CD4-positive, alpha-beta T cell (primary cell): ENCODE measurements at regions of chr10 and their contacts with region 1.

Region 1: DNA sequence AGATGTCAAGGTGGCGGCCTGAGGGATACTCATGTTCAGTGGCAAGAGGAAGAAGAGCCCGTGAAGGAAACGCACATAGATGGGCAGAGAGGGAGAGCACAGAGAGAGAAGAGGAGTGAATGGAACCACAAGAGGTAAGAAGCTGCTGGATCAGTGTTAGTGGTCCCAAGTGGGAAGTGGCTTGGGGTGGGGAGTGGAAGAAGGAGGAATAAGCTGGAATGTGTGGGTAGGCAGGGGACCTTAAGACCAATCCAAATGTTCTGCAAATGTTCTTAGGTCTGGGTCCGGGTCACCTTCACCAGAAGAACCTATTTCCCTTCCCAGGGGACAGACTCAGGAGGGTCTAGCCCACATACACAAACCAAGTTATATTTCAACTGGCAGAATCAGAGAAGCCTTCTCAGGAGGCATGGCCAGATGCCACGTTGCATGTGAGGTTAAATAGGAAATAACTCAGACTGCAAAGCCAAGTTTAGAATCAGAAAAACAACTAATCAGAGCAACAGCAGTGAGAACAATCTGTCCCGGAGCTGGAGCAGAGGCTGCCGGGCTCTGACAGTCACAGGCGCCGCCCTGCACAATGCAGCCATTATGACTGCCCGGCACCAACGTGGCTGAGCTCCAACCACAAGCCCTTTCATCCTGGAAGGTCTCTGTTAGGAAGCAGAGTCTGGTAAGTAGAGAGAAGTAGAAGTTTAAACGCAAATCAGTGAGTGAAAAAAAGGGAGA is 78.6 kb upstream of the ARMC3 start:
- DNase-seq: peak in 4 of 14 experiments; percentile 8 to 34 (median 12)
- ATAC-seq: peak; percentile 51
- H3K4me3 ChIP-seq: no peak overlapping the region
- H3K4me3 Mint-ChIP-seq: peak overlapping the region; percentile 76
- H3K27ac ChIP-seq: no peak overlapping the region
- H3K27ac Mint-ChIP-seq: peak overlapping the region; percentile 13
- H3K4me1 ChIP-seq: peaks cover 4% of the 10 kb centered on the region
- H3K4me1 Mint-ChIP-seq: peaks cover 23% of the 10 kb centered on the region
- H3K27me3 ChIP-seq: no peaks in the 10 kb centered on the region
- H3K27me3 Mint-ChIP-seq: no peaks in the 10 kb centered on the region
- CTCF ChIP-seq: no peak

Region 2: DNA sequence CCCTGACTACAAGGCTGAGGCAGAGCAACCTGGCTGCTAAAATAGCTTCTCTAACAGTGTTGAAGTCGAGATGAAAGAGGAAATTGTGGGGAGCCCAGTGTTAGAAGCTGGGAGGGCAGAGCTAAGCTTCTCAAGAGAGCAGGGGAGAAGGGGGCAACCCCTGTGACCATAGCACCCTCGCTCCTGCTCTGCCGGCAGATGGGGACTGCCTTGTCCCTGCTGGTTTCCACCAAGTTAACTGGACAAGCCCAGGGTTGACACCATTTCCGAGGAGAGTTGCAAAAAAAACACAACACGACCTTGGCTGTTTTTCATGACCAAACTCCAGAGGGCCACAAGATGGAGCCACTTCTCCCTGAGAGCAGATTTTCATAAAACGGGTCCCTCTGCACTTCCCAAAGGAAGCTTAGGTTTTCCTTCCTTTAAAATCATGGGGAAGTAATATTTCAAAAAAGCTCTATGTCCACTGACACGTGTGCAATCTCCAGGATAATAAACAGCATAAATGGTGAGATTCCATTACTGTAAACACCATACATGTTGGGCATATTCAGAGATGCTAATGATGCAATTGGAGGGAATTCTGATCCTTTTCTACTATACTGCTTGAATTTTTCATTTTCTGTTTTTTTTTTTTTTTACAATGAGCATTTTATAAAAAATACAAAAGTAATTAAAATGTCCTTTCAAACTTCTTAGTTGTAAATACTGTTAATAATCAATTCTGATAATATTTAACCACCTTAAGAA is 275.2 kb before region 1 on chr10:
- CTCF ChIA-PET with region 1: no interaction called
- POLR2A ChIA-PET with region 1: no interaction called
- intact Hi-C with region 1: loop called (anchors 5 kb)
- DNase-seq: peak in 6 of 14 experiments; percentile 8 to 69 (median 50)
- ATAC-seq: peak; percentile 37
- H3K4me3 ChIP-seq: no peak overlapping the region
- H3K4me3 Mint-ChIP-seq: no peak overlapping the region
- H3K27ac ChIP-seq: no peak overlapping the region
- H3K27ac Mint-ChIP-seq: peak overlapping the region; percentile 75
- H3K4me1 ChIP-seq: peaks cover 14% of the 10 kb centered on the region
- H3K4me1 Mint-ChIP-seq: peaks cover 67% of the 10 kb centered on the region
- H3K27me3 ChIP-seq: no peaks in the 10 kb centered on the region
- H3K27me3 Mint-ChIP-seq: no peaks in the 10 kb centered on the region
- CTCF ChIP-seq: peak; percentile 73

Region 3: DNA sequence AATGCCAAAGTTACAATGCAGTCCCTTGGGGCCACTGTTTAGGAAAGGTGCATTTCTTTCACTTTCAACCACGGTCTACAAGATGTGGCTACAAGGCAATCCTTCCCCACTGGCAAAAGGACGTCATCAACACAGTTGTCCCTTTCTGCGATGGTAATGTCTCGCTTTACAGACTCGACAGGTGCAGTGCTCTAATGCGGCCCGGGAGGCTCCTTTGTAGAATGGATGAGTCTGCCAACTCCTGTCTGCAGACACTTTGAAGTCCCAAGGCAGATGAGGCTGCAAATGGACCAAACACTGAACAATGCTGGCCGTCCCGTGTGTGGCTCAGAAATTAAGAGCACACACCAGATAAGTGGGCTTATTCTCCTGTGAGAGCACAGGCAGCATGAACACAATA is 268.5 kb before region 1 on chr10:
- CTCF ChIA-PET with region 1: no interaction called
- POLR2A ChIA-PET with region 1: no interaction called
- intact Hi-C with region 1: loop called in 1 of 2 experiments (anchors 5 kb)
- DNase-seq: no peak
- ATAC-seq: no peak
- H3K4me3 ChIP-seq: no peak overlapping the region
- H3K4me3 Mint-ChIP-seq: no peak overlapping the region
- H3K27ac ChIP-seq: no peak overlapping the region
- H3K27ac Mint-ChIP-seq: peak overlapping the region; percentile 21
- H3K4me1 ChIP-seq: peaks cover 9% of the 10 kb centered on the region
- H3K4me1 Mint-ChIP-seq: peaks cover 54% of the 10 kb centered on the region
- H3K27me3 ChIP-seq: no peaks in the 10 kb centered on the region
- H3K27me3 Mint-ChIP-seq: no peaks in the 10 kb centered on the region
- CTCF ChIP-seq: no peak

Region 4: DNA sequence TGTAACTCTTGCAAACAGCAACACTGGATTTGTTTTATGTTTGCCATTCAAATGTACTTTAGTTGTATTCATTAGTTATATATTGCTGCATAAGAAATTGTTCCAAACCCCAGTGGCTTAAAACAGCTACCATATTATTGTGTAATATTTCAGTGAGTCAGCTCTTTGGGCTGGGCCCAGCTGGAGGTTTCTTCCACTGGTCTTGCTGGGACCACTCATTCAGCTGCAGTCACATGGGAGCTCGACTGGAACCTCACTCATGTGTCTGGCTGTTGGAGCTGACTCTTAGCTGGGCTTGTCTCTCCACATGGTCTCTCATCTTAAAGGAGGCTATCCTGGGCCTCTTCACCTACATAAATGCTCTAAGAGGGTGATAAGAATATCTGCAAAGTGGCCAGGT is 111.7 kb before region 1 on chr10:
- CTCF ChIA-PET with region 1: no interaction called
- POLR2A ChIA-PET with region 1: no interaction called
- intact Hi-C with region 1: no loop called
- DNase-seq: peak in 1 of 14 experiments; percentile 36
- ATAC-seq: no peak
- H3K4me3 ChIP-seq: no peak overlapping the region
- H3K4me3 Mint-ChIP-seq: no peak overlapping the region
- H3K27ac ChIP-seq: no peak overlapping the region
- H3K27ac Mint-ChIP-seq: no peak overlapping the region
- H3K4me1 ChIP-seq: no peaks in the 10 kb centered on the region
- H3K4me1 Mint-ChIP-seq: no peaks in the 10 kb centered on the region
- H3K27me3 ChIP-seq: no peaks in the 10 kb centered on the region
- H3K27me3 Mint-ChIP-seq: no peaks in the 10 kb centered on the region
- CTCF ChIP-seq: no peak